K562 (cell line): ENCODE measurements at regions of chr10 and their contacts with region 1.

Region 1: GRCh38 chr10:113073549-113074189 is 123.6 kb downstream of the TCF7L2 start:
- DNase-seq: peak; percentile 28 to 70 (median 34)
- ATAC-seq: peak; percentile 86
- H3K4me3 ChIP-seq: no peak overlapping the region
- H3K27ac ChIP-seq: peak overlapping the region; percentile 46; the same call in 2 of the 3 replicates
- H3K4me1 ChIP-seq: peaks cover 7 to 9% of the 10 kb centered on the region in 2 experiments; a peak in 4 of 5 replicates
- H3K27me3 ChIP-seq: no peaks in the 10 kb centered on the region
- CTCF ChIP-seq: no peak
- EP300 ChIP-seq: no peak
- POLR2A ChIP-seq: no peak
- RAD21 ChIP-seq: no peak

Region 2: GRCh38 chr10:112858986-112859651 is 214.6 kb before region 1 on chr10:
- CTCF ChIA-PET with region 1: no interaction called
- POLR2A ChIA-PET with region 1: no interaction called
- in situ Hi-C with region 1: no loop called
- intact Hi-C with region 1: no loop called
- DNase-seq: no peak
- ATAC-seq: no peak
- H3K4me3 ChIP-seq: no peak overlapping the region
- H3K27ac ChIP-seq: no peak overlapping the region
- H3K4me1 ChIP-seq: no peaks in the 10 kb centered on the region; a peak in 1 of 5 replicates
- H3K27me3 ChIP-seq: 0 out of 5 replicates have a peak, but pooled peaks cover 0 to 4% of the 10 kb centered on the region in 2 experiments
- CTCF ChIP-seq: no peak
- EP300 ChIP-seq: no peak
- POLR2A ChIP-seq: no peak
- RAD21 ChIP-seq: no peak

Region 3: GRCh38 chr10:113087165-113088029 is 13.7 kb after region 1 on chr10:
- CTCF ChIA-PET with region 1: no interaction called
- POLR2A ChIA-PET with region 1: interaction called, 12 read pairs
- in situ Hi-C with region 1: no loop called
- intact Hi-C with region 1: no loop called
- DNase-seq: peak; percentile 32 to 76 (median 50)
- ATAC-seq: peak; percentile 84
- H3K4me3 ChIP-seq: no peak overlapping the region
- H3K27ac ChIP-seq: peak overlapping the region; percentile 49; the same call in 2 of the 3 replicates
- H3K4me1 ChIP-seq: peaks cover 6 to 39% of the 10 kb centered on the region in 2 experiments; a peak in 3 of 5 replicates
- H3K27me3 ChIP-seq: no peaks in the 10 kb centered on the region; a peak in 1 of 5 replicates
- CTCF ChIP-seq: no peak
- EP300 ChIP-seq: peak; percentile 48; the same call in 1 of the 2 replicates
- POLR2A ChIP-seq: no peak
- RAD21 ChIP-seq: no peak